ENCODE measurements at regions of chr3 and their contacts with region 1.

Region 1: GRCh38 chr3:148955544-148956346 is 35.6 kb upstream of the GYG1 start:
- DNase-seq: peak; percentile 74
- H3K4me3 Mint-ChIP-seq: no peak overlapping the region
- H3K27ac Mint-ChIP-seq: no peak overlapping the region
- H3K4me1 Mint-ChIP-seq: peaks cover 11% of the 10 kb centered on the region
- H3K27me3 Mint-ChIP-seq: peaks cover 12% of the 10 kb centered on the region
- CTCF ChIP-seq: peak; percentile 68

Region 2: GRCh38 chr3:148778926-148779325 is 176.8 kb before region 1 on chr3:
- CTCF ChIA-PET with region 1: no interaction called
- intact Hi-C with region 1: no loop called
- DNase-seq: no peak
- H3K4me3 Mint-ChIP-seq: no peak overlapping the region
- H3K27ac Mint-ChIP-seq: no peak overlapping the region
- H3K4me1 Mint-ChIP-seq: no peaks in the 10 kb centered on the region
- H3K27me3 Mint-ChIP-seq: no peaks in the 10 kb centered on the region
- CTCF ChIP-seq: no peak

Region 3: GRCh38 chr3:148861277-148861869 is 94.4 kb before region 1 on chr3:
- CTCF ChIA-PET with region 1: interaction called, 10 read pairs
- intact Hi-C with region 1: no loop called
- DNase-seq: no peak
- H3K4me3 Mint-ChIP-seq: no peak overlapping the region
- H3K27ac Mint-ChIP-seq: no peak overlapping the region
- H3K4me1 Mint-ChIP-seq: no peaks in the 10 kb centered on the region
- H3K27me3 Mint-ChIP-seq: peaks cover under 1% of the 10 kb centered on the region
- CTCF ChIP-seq: peak; percentile 82

Region 4: GRCh38 chr3:148924562-148924961 is 31.2 kb before region 1 on chr3:
- CTCF ChIA-PET with region 1: no interaction called
- intact Hi-C with region 1: no loop called
- DNase-seq: no peak
- H3K4me3 Mint-ChIP-seq: no peak overlapping the region
- H3K27ac Mint-ChIP-seq: no peak overlapping the region
- H3K4me1 Mint-ChIP-seq: peaks cover 9% of the 10 kb centered on the region
- H3K27me3 Mint-ChIP-seq: no peaks in the 10 kb centered on the region
- CTCF ChIP-seq: no peak

Region 5: GRCh38 chr3:148991194-148992026 is 35.7 kb after region 1 on chr3 and contains the start of gene GYG1:
- CTCF ChIA-PET with region 1: interaction called, 22 read pairs
- intact Hi-C with region 1: loop called (anchors 2 kb)
- DNase-seq: peak; percentile 92
- H3K4me3 Mint-ChIP-seq: peak within 1 kb of the TSS; percentile 97
- H3K27ac Mint-ChIP-seq: peak within 1 kb of the TSS; percentile 67
- H3K4me1 Mint-ChIP-seq: peaks cover 17% of the 10 kb centered on the region
- H3K27me3 Mint-ChIP-seq: peaks cover 4% of the 10 kb centered on the region
- CTCF ChIP-seq: peak; percentile 65
- total RNA-seq, gene GYG1: 46.7 and 49.2 TPM in 2 replicates

Region 6: DNA sequence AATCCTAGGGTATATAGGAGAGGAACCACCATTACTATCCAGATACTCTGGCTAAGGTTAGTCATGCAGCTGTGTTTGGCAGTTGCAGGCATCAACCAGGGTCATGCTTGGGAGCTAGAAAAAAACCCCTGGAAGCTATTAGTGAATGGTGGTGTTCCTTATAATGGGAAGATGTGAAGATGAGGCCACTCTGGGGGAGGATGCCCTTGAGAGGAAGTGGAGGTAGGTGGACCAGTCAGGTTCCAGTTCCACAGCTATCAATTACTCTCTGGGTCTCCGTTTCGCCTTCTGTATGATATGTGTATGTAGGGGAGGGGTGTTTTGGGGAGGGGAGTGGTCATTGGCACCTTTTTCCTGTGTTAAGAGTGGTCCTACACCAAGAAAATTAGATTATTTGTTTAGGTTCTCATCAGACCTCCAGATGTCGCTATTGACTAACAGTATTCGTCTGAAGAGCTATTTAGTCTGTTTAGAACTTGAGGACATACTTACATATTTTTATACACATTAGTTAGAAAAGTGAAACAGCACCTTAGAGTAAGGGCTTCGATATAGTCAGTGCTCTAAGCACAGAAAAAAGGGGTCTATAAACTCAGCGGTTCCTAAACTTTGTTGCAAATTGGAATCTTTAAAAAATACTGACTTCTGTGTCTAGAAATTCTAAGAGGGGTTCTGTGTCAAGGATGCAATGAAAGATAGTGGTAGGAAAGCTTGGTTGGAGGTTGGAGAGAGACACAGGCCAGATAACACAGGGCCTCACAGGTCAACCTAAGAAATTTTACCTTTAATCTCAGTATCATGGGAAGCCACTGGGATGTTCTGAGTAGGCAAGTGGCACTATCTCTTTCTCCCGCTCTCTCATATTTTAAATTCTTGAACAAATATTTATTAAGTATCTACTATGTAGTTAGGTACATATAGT is 164.6 kb after region 1 on chr3:
- CTCF ChIA-PET with region 1: interaction called, 13 read pairs
- intact Hi-C with region 1: loop called (anchors 1 kb)
- DNase-seq: peak; percentile 41
- H3K4me3 Mint-ChIP-seq: no peak overlapping the region
- H3K27ac Mint-ChIP-seq: no peak overlapping the region
- H3K4me1 Mint-ChIP-seq: no peaks in the 10 kb centered on the region
- H3K27me3 Mint-ChIP-seq: no peaks in the 10 kb centered on the region
- CTCF ChIP-seq: peak; percentile 81

Region 7: GRCh38 chr3:149129326-149130205 is 173.8 kb after region 1 on chr3 and contains the start of gene HPS3:
- CTCF ChIA-PET with region 1: interaction called, 10 read pairs
- intact Hi-C with region 1: no loop called
- DNase-seq: peak; percentile 98
- H3K4me3 Mint-ChIP-seq: peak within 1 kb of the TSS; percentile 94
- H3K27ac Mint-ChIP-seq: peak within 1 kb of the TSS; percentile 91
- H3K4me1 Mint-ChIP-seq: peaks cover 29% of the 10 kb centered on the region
- H3K27me3 Mint-ChIP-seq: no peaks in the 10 kb centered on the region
- CTCF ChIP-seq: peak; percentile 16
- total RNA-seq, gene HPS3: 46.4 and 49.5 TPM in 2 replicates

Region 8: DNA sequence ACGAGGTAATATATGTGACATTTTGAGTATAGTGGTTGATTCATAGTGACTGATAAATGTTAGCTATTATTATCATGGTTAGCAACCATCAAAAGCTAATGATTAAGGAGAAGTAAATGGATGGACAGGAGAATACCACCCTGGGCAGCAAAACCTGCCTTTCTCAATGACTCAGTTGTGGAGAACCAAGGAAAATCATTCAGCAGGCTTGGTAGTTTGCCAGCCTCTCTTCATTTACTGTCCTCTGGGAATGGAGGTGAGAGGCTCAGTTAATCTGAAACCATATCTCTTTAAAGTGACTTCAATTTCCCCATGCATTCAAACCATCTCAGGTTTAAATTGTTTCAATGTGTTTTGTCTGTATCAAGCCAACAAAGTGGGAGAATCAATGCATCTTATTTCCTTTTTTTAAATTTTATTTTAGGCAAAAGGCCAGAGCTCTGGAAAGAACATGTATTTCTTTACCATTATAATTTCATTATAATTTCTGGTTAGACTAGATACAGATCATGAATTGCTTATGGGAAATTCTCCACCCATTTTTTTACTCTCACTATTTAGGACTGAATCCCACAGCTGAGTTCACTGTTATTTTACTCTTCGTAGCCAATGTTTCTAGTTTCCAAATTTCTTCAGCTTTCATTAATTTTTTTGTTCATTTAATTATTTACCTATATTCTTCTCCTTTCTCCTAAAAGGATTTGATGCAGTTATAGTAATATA is 375.0 kb after region 1 on chr3:
- CTCF ChIA-PET with region 1: interaction called, 5 read pairs
- intact Hi-C with region 1: loop called (anchors 1 kb)
- DNase-seq: peak; percentile 43
- H3K4me3 Mint-ChIP-seq: no peak overlapping the region
- H3K27ac Mint-ChIP-seq: peak overlapping the region; percentile 14
- H3K4me1 Mint-ChIP-seq: peaks cover 39% of the 10 kb centered on the region
- H3K27me3 Mint-ChIP-seq: no peaks in the 10 kb centered on the region
- CTCF ChIP-seq: no peak

Measured in Calu3 (cell line).